ENCODE measurements at regions of chr14 and their contacts with region 1.

Region 1: DNA sequence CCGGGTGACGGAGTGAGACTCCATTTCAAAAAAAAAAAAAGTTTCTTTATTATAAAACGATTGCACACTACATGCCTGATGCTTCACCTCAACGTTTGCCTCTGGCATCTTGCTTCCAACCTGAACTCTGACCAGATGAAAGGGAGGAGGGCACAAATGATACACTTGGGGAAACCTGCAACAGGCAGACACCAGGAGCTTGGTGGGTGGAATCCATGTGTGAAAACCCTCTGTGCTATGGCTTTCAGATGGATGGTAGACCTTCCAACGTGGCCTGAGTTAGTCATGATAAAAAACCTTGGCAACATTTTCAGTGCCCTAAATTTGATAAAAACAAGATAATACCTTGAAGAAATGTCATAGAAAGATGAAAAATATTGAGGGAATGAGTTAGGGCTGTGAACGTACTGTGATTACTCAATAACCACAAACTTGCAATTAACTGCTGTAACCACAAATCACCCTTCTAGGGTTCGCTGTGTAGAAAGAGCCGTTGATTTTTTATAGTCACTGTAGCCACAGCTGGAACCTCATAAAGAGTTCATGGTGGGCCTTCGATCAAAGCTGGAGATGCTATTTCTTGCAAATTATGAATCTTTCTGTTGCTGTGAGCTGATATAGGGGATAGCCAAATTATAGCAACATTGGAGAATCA is 26.1 kb upstream of the GZMB start:
- DNase-seq: peak in 2 of 9 experiments; percentile 52 to 65
- ATAC-seq: peak; percentile 38
- H3K4me3 ChIP-seq: no peak overlapping the region
- H3K4me3 Mint-ChIP-seq: no peak overlapping the region
- H3K27ac ChIP-seq: no peak overlapping the region
- H3K27ac Mint-ChIP-seq: no peak overlapping the region
- H3K4me1 ChIP-seq: peaks cover 6% of the 10 kb centered on the region
- H3K4me1 Mint-ChIP-seq: peaks cover 25% of the 10 kb centered on the region
- H3K27me3 ChIP-seq: no peaks in the 10 kb centered on the region
- H3K27me3 Mint-ChIP-seq: no peaks in the 10 kb centered on the region
- CTCF ChIP-seq: no peak

Region 2: GRCh38 chr14:24612196-24612595 is 47.8 kb before region 1 on chr14:
- CTCF ChIA-PET with region 1: no interaction called
- POLR2A ChIA-PET with region 1: no interaction called
- intact Hi-C with region 1: loop called in 1 of 2 experiments (anchors 1 kb)
- DNase-seq: peak in 2 of 9 experiments; percentile 43 to 62
- ATAC-seq: no peak
- H3K4me3 ChIP-seq: no peak overlapping the region
- H3K4me3 Mint-ChIP-seq: no peak overlapping the region
- H3K27ac ChIP-seq: peak overlapping the region in 1 of 2 experiments; percentile 72
- H3K27ac Mint-ChIP-seq: peak overlapping the region; percentile 29
- H3K4me1 ChIP-seq: peaks cover 9% of the 10 kb centered on the region
- H3K4me1 Mint-ChIP-seq: peaks cover 35% of the 10 kb centered on the region
- H3K27me3 ChIP-seq: no peaks in the 10 kb centered on the region
- H3K27me3 Mint-ChIP-seq: no peaks in the 10 kb centered on the region
- CTCF ChIP-seq: no peak

Measured in CD8-positive, alpha-beta T cell (primary cell).